BJ (cell line): ENCODE measurements at regions of chr6 and their contacts with region 1.

Region 1: GRCh38 chr6:45946352-45946751 is 69.3 kb downstream of the CLIC5 start:
- DNase-seq: peak; percentile 57
- H3K4me3 ChIP-seq: no peak overlapping the region
- H3K27me3 ChIP-seq: peaks cover 2% of the 10 kb centered on the region
- CTCF ChIP-seq: peak; percentile 77

Region 2: DNA sequence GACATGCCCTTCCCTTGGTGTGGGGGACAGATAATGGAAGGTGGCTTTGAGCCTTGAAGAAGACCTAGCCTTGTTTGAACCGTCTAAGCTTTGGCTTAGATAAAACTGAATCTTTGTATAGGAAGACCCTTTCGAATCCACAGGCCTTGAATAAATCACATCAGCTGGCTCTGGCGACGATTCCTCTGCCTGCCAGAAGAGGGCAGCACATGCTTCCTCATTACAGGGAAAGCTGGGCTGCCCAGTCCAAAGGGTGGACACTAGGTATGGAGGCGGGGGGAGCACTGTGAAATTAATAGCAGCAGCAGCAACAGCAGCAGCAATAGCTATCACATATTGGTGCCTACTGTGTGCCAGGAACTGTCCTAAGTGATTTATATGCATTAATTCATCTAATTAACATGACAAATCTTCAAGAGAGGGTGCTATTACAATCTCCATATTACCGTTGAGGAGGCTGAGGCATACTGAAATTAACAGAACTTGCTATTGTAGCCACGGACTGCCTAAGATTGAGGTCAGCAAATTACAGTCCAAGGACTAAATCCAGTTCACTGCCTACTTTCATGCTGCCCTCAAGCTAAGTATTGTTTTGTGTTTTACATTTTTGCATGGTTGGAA is 15.8 kb before region 1 on chr6:
- CTCF ChIA-PET with region 1: interaction called, 43 read pairs
- POLR2A ChIA-PET with region 1: no interaction called
- DNase-seq: no peak
- H3K4me3 ChIP-seq: no peak overlapping the region
- H3K27me3 ChIP-seq: peaks cover 10% of the 10 kb centered on the region
- CTCF ChIP-seq: peak; percentile 99

Region 3: DNA sequence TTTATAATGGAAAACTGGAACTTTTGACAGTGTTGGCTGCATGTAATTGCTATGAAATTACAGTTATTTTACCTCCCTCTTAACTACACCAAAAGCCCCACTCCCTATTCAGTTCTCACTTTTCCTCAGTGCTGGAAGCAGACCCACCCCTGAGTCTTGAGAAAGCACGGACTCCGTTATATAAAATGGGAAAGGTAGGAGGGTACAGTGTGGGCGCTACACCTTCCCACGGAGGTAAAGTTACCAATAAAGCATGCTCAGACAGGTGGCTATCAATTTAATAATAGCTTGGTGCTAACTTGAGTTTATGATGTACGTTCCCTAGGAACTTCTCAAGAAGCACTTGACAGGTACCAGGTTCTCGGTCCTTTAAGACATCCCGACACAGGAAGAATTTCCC is 10.3 kb after region 1 on chr6:
- CTCF ChIA-PET with region 1: interaction called, 15 read pairs
- POLR2A ChIA-PET with region 1: no interaction called
- DNase-seq: no peak
- H3K4me3 ChIP-seq: no peak overlapping the region
- H3K27me3 ChIP-seq: peaks cover 3% of the 10 kb centered on the region
- CTCF ChIP-seq: no peak

Region 4: GRCh38 chr6:46293641-46294316 is 347.4 kb after region 1 on chr6:
- CTCF ChIA-PET with region 1: no interaction called
- POLR2A ChIA-PET with region 1: no interaction called
- DNase-seq: no peak
- H3K4me3 ChIP-seq: no peak overlapping the region
- H3K27me3 ChIP-seq: no peaks in the 10 kb centered on the region
- CTCF ChIP-seq: no peak